HEK293T (cell line): ENCODE measurements at regions of chr14 and their contacts with region 1.

Region 1: GRCh38 chr14:39114073-39114838 is at the start of gene GEMIN2:
- DNase-seq: peak; percentile 95

Region 2: GRCh38 chr14:39102969-39103957 is 11.0 kb before region 1 on chr14 and contains the start of gene SEC23A:
- CTCF ChIA-PET with region 1: no interaction called
- POLR2A ChIA-PET with region 1: interaction called, 66 read pairs
- DNase-seq: peak; percentile 75

Region 3: DNA sequence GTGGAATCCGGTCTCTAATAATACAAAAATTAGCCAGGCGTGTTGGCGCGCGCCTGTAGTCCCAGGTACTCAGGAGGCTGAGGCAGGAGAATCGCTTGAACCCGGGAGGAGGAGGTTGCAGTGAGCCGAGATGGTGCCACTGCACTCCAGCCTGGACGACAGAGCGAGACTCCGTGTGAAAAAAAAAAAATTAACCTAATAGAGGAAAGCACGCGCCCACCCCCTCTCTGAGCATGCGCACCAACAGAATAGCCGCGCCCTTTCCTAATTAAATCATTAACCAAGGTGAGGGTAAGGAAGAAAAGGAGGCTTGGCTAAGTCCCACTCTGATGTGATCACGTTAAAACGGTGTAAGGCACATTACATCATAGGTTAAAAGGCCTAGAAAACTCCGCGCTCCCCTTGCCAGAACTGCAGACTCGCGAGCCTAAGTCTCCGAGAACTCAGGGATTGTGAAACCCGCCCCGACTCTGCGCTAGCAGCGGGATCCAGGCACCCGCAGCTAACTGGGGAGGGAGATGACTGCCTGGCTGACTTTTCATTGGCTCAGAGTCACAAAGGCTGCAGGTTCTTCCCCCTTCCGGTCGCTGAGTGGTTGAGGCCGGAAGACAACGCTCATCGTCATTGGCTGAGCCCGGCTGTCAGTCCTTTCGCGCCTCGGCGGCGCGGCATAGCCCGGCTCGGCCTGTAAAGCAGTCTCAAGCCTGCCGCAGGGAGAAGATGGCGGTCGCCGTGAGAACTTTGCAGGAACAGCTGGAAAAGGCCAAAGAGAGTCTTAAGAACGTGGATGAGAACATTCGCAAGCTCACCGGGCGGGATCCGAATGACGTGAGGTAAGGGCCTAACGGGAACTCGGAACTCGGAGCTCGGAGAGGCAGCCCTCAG is 60.5 kb after region 1 on chr14 and contains the start of gene PNN:
- CTCF ChIA-PET with region 1: interaction called, 3 read pairs
- POLR2A ChIA-PET with region 1: interaction called, 48 read pairs
- DNase-seq: peak; percentile 90

Region 4: DNA sequence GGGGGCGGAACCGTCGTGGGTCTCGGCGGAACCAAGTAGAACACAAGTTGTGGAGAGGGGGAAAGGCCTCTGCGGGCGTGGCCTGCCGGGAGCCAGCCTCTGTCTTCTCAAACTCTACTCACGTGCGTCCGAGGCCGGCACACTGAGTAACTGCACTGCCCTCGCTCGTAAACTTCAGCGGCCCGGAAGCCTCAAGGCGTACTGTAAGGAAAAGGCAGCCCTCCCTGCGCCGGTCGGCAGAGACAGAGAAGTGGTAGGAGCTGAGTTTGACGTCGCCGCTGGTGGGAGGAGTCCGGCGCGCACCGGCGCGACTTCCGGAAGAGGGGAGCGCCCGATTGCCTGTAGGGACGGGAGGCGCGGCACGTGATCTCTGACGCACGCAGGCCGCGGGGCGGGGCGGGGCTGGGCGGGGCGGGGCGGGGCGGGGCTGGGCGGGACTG is 317.9 kb after region 1 on chr14 and contains the start of gene FBXO33:
- CTCF ChIA-PET with region 1: no interaction called
- POLR2A ChIA-PET with region 1: interaction called, 15 read pairs
- DNase-seq: peak; percentile 90